AG04449 (cell line): ENCODE measurements at regions of chr19 and their contacts with region 1.

Region 1: GRCh38 chr19:18450931-18451845 is 13.3 kb upstream of the ISYNA1 start:
- DNase-seq: no peak
- H3K4me3 ChIP-seq: no peak overlapping the region
- CTCF ChIP-seq: peak; percentile 99

Region 2: DNA sequence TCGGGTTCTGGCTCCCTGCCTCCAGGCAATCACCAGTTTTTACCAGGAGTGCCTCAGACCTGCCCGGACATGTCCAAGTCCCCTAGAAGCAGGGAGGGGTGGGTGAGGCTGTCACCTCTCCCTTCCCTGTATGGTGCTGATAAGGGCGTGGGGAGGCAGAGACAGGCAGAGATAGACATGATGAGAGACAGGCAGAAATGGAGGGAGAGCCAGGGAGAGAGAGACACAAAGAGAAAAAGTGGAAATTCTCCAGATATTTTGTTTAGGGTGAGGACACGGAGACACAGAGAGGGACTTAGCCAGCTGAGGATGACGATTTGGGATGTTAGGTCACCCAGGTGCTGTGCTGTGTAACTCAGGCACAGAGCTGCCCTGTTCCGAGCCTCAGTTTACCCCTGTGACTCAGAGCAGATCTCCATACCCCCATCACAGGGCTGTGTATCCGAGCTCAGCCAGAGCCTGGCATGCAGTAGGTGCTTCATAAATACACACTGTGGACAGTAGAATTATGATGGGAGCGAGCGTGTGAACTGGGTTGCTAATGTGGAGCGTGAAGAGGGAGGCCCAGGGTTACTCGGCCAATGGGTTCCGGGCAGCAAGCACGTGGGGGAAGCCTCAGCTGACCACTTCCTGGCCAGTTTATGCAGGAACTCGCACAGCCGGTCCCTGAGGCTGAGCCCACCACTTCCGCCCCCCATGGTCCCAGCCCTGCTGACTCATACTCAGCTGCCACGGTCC is 77.1 kb before region 1 on chr19:
- CTCF ChIA-PET with region 1: no interaction called
- POLR2A ChIA-PET with region 1: no interaction called
- DNase-seq: peak; percentile 91
- H3K4me3 ChIP-seq: no peak overlapping the region
- CTCF ChIP-seq: no peak

Region 3: GRCh38 chr19:18440415-18440877 is 10.7 kb before region 1 on chr19:
- CTCF ChIA-PET with region 1: interaction called, 27 read pairs
- POLR2A ChIA-PET with region 1: interaction called, 3 read pairs
- DNase-seq: no peak
- H3K4me3 ChIP-seq: no peak overlapping the region
- CTCF ChIP-seq: peak; percentile 9

Region 4: DNA sequence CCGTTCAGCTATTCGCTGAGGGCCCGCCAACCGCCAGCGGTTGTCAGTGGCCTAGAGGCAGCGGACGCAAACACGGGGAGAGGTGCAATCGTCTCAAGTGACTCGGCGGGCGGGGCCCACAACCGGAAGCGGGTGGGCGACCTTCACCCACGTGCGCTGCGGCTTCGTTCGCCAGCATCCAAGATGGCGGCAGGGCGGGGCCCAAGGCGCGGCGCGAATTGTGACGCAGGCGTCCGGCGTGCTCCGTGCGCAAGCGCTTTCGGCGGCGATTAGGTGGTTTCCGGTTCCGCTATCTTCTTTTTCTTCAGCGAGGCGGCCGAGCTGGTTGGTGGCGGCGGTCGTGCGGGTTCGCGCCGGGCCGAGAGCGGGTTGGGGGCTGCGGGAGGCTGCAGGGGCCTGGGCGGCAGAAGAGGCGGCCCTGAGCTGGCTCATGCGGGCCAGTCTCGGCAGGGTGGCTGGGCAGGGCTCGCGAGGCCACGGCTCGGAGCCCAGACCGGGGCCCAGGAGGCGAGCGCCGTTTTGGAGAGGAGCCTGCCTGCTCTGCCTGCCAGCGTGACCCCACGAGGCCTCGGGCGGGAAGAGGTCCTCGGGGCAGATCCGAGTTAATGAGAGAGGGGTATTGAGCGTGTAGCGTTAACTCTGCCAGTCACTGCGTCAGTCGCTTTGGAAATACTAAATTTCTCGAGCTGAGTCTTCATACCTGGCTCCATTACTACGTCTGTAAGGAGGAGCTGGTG is 120.5 kb after region 1 on chr19 and contains the start of gene UBA52:
- CTCF ChIA-PET with region 1: interaction called, 20 read pairs
- POLR2A ChIA-PET with region 1: no interaction called
- DNase-seq: peak; percentile 62
- H3K4me3 ChIP-seq: peak within 1 kb of the TSS; percentile 96
- CTCF ChIP-seq: no peak